ENCODE measurements at regions of chr3 and their contacts with region 1.

Region 1: DNA sequence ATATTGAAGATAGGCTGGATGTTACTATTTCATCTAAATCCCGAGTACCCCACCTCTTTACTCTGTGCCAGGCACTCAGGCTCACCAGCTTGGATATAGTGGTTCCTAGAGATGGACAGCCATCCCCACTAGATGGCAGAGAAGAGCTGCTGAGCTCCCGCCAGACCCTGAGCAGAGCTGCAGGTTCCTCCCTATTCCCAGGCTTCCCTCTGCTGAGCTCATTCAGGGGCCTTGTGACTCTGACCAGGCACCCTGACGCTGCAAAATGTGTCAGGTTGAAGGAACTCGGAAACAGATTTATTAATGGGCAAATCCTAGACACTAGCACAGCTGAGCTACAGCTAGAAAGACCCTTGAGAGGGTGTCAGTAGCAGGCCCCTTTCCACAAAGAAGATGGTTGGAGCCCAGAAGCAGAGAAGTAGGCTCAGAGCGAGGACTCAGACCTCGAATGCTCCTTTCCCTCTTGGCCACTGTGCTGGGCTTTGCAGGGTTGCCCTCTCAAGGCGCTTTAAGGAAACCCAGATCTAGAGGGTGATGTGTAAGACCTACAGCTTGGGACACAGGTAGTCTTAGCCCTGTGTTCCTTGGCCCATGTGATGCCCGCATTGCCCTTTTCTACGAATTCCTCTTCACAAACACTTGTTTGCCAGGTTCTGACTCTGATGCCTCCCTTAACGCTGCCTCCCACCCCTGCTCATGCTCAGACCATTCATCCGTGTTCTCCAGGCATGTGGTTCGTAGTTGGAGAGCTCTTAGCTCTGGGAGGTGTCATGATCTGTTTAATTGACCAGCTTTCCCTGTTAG is 38.0 kb upstream of the RHO start:
- DNase-seq: peak; percentile 88

Region 2: GRCh38 chr3:129463716-129464115 is 26.7 kb before region 1 on chr3:
- CTCF ChIA-PET with region 1: no interaction called
- POLR2A ChIA-PET with region 1: no interaction called
- DNase-seq: no peak

Region 3: DNA sequence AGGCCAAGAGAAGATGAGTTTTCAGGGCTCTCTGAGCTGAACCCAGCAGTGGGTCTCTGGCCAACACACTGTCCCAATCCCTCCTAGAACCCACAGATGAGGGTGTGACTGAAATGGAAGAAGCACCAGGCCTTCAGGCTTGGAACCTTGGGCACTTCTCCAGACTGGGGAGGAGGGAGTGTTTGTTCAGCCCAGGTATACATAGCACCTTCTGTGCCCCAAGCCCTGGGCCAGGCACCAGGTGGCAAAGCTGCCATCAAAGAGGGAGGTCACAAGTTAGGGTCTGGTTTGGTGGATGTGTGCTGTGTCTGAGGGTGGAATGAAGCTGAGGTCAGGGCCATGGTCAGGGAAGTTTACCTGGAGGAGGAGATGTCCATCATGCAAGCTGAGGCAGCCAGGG is 22.2 kb after region 1 on chr3:
- CTCF ChIA-PET with region 1: interaction called, 10 read pairs
- POLR2A ChIA-PET with region 1: no interaction called
- DNase-seq: no peak

Region 4: GRCh38 chr3:129829640-129830039 is 339.2 kb after region 1 on chr3:
- CTCF ChIA-PET with region 1: interaction called, 14 read pairs
- POLR2A ChIA-PET with region 1: no interaction called
- DNase-seq: peak; percentile 55